CD4-positive, alpha-beta memory T cell (primary cell): ENCODE measurements at regions of chr3 and their contacts with region 1.

Region 1: GRCh38 chr3:129120254-129121004 is 1.2 kb downstream of the RAB43 start:
- DNase-seq: peak; percentile 92 to 97 (median 95)
- H3K4me3 ChIP-seq: peak overlapping the region; percentile 73 to 79
- H3K4me3 Mint-ChIP-seq: peak overlapping the region; percentile 92 to 99 (median 94)
- H3K27ac ChIP-seq: peak overlapping the region; percentile 62
- H3K27ac Mint-ChIP-seq: peak overlapping the region; percentile 94 to 99 (median 98)
- H3K4me1 ChIP-seq: peaks cover 54% of the 10 kb centered on the region
- H3K4me1 Mint-ChIP-seq: peaks cover 34 to 70% (median 52%) of the 10 kb centered on the region in 4 donors
- H3K27me3 ChIP-seq: no peaks in the 10 kb centered on the region
- H3K27me3 Mint-ChIP-seq: no peaks in the 10 kb centered on the region

Region 2: GRCh38 chr3:129016356-129016719 is 104.1 kb before region 1 on chr3:
- CTCF ChIA-PET with region 1: interaction called, 25 read pairs
- POLR2A ChIA-PET with region 1: interaction called, 70 read pairs
- intact Hi-C with region 1: no loop called
- DNase-seq: peak; percentile 54 to 74 (median 59)
- H3K4me3 ChIP-seq: peak overlapping the region; percentile 41 to 54
- H3K4me3 Mint-ChIP-seq: peak overlapping the region; percentile 54 to 89 (median 83)
- H3K27ac ChIP-seq: peak overlapping the region; percentile 64
- H3K27ac Mint-ChIP-seq: peak overlapping the region; percentile 85 to 99 (median 94)
- H3K4me1 ChIP-seq: peaks cover 36% of the 10 kb centered on the region
- H3K4me1 Mint-ChIP-seq: peaks cover 32 to 54% (median 44%) of the 10 kb centered on the region in 4 donors
- H3K27me3 ChIP-seq: no peaks in the 10 kb centered on the region
- H3K27me3 Mint-ChIP-seq: no peaks in the 10 kb centered on the region

Region 3: DNA sequence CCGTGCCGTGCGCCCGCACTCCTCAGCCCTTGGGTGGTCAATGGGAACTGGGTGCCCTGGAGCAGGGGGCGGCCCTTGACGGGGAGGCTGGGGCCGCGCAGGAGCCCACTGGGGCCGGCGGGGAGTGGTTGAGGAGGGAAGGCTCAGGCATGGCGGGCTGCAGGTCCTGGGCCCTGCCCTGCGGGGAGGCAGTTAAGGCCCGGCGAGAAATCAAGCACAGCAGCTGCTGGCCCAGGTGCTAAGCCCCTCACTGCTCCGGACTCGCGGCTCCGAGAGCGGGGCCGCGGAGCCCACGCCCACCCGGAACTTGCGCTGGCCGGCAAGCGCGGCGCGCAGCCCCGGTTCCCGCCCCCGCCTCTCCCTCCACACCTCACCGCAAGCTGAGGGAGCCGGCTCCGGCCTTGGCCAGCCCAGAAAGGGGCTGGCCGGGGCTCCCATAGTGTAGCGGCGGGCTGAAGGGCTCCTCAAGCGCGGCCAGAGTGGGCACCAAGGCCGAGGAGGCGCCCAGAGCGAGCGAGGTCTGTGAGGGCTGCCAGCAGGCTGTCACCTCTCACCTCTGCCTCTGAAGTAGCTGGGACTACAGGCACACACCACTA is 52.0 kb before region 1 on chr3:
- CTCF ChIA-PET with region 1: interaction called, 13 read pairs
- POLR2A ChIA-PET with region 1: interaction called, 9 read pairs
- intact Hi-C with region 1: no loop called
- DNase-seq: no peak
- H3K4me3 ChIP-seq: no peak overlapping the region
- H3K4me3 Mint-ChIP-seq: peak overlapping the region; percentile 40 to 79 (median 68)
- H3K27ac ChIP-seq: no peak overlapping the region
- H3K27ac Mint-ChIP-seq: no peak overlapping the region
- H3K4me1 ChIP-seq: no peaks in the 10 kb centered on the region
- H3K4me1 Mint-ChIP-seq: peaks cover 0 to 5% (median 3%) of the 10 kb centered on the region in 4 donors
- H3K27me3 ChIP-seq: no peaks in the 10 kb centered on the region
- H3K27me3 Mint-ChIP-seq: peaks cover 3 to 10% of the 10 kb centered on the region in 2 donors

Region 4: GRCh38 chr3:129132097-129132866 is 11.9 kb after region 1 on chr3:
- CTCF ChIA-PET with region 1: no interaction called
- POLR2A ChIA-PET with region 1: interaction called, 28 read pairs
- intact Hi-C with region 1: no loop called
- DNase-seq: no peak
- H3K4me3 ChIP-seq: no peak overlapping the region
- H3K4me3 Mint-ChIP-seq: no peak overlapping the region
- H3K27ac ChIP-seq: no peak overlapping the region
- H3K27ac Mint-ChIP-seq: peak overlapping the region in 5 of 7 donors; percentile 45 to 88 (median 55)
- H3K4me1 ChIP-seq: no peaks in the 10 kb centered on the region
- H3K4me1 Mint-ChIP-seq: peaks cover 0 to 6% (median 4%) of the 10 kb centered on the region in 4 donors
- H3K27me3 ChIP-seq: no peaks in the 10 kb centered on the region
- H3K27me3 Mint-ChIP-seq: no peaks in the 10 kb centered on the region

Region 5: DNA sequence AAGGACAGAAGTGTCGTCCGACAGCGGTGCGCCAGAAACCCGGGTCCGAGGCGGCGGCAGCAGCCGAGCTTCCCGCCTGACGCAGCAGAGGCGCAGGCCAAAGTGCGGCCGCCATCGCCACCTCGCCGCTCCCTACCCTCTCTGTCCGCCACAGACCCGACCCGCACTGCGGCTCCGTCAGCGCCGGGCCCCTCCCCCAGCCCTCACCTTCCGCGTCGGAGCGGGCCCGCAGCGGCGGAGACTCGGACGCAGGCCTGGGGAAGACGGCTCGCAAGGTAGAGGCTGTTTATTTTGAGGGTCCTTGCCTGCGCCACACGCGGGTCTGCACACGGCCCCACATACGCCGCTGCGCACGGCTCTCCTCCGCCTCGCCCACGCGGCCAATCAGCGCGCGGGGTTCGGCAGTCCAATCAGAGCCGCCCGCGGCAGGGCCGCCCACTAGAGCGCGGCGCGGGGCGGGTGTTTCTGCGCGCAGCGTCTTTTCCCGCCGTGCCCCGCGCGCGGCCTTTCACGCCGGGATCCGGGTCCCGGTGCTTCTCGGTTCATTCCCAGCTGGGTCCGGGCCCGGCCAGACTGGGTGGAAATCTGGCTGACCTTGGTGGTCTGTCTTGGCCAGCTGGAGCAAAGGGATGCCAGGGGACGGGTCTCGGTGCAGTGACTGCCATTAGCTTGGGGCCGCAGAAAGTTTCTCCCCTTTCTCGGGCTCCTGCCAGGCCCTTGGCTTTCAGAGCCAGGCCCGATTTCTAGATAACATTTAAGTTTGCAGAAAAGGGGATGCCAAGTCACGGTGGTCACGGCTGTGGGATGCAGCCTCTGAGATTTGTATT is 63.4 kb after region 1 on chr3 and contains the start of gene CNBP:
- CTCF ChIA-PET with region 1: interaction called, 3 read pairs
- POLR2A ChIA-PET with region 1: interaction called, 133 read pairs
- intact Hi-C with region 1: loop called (anchors 1 kb)
- DNase-seq: peak; percentile 90 to 95 (median 93)
- H3K4me3 ChIP-seq: peak within 1 kb of the TSS; percentile 51 to 93
- H3K4me3 Mint-ChIP-seq: peak within 1 kb of the TSS; percentile 89 to 99 (median 97)
- H3K27ac ChIP-seq: peak within 1 kb of the TSS; percentile 99
- H3K27ac Mint-ChIP-seq: peak within 1 kb of the TSS; percentile 91 to 99 (median 98)
- H3K4me1 ChIP-seq: peaks cover 41% of the 10 kb centered on the region
- H3K4me1 Mint-ChIP-seq: peaks cover 20 to 55% (median 31%) of the 10 kb centered on the region in 4 donors
- H3K27me3 ChIP-seq: no peaks in the 10 kb centered on the region
- H3K27me3 Mint-ChIP-seq: no peaks in the 10 kb centered on the region
- total RNA-seq, gene CNBP: 369 to 400 TPM

Region 6: DNA sequence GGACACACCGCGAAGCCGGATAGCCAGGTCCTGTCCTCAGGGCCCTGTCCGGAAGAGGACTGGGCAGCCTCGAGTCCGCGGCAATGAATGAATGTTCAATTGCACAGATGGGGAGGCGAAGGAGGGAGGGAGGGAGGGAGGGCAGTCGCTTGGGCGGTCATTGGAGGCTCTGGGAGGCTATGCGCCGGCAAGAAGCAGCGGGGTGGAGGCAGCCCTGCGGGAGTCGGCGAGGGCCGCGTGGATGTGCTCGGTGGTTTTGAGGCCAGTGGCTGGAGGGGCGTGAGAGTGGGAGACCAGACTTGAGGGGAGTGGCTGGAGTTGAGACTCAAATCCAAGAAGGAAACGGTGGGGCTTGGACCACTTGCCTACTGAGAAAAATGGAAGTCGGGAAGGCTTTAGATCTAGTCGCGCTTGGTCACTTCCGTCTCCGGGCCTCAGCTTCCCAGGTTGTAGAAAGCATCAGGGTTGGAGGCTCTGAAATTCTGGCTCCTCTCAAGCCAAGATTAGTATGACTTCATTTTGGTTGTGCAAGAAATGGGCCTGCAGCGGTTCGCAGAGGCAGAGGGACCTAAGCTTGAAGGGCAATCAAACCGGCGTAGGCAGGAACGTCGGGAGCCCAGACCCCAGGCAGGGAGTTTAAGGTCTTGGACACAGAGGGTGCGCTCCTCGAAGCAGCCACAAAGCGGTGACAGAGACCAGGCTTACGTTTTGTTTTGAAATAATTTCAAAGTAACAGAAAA is 507.2 kb after region 1 on chr3:
- CTCF ChIA-PET with region 1: no interaction called
- POLR2A ChIA-PET with region 1: no interaction called
- intact Hi-C with region 1: no loop called
- DNase-seq: peak; percentile 68 to 73 (median 69)
- H3K4me3 ChIP-seq: peak overlapping the region; percentile 64 to 70
- H3K4me3 Mint-ChIP-seq: peak overlapping the region; percentile 87 to 93 (median 90)
- H3K27ac ChIP-seq: peak overlapping the region; percentile 18
- H3K27ac Mint-ChIP-seq: peak overlapping the region; percentile 64 to 92 (median 88)
- H3K4me1 ChIP-seq: peaks cover 10% of the 10 kb centered on the region
- H3K4me1 Mint-ChIP-seq: peaks cover 7 to 22% (median 17%) of the 10 kb centered on the region in 4 donors
- H3K27me3 ChIP-seq: no peaks in the 10 kb centered on the region
- H3K27me3 Mint-ChIP-seq: no peaks in the 10 kb centered on the region